ENCODE measurements at regions of chr15 and their contacts with region 1.

Region 1: GRCh38 chr15:78241007-78241406 is 6.6 kb upstream of the ACSBG1 start:
- DNase-seq: peak; percentile 80 to 88
- H3K4me3 ChIP-seq: no peak overlapping the region
- H3K4me3 Mint-ChIP-seq: no peak overlapping the region
- H3K27ac Mint-ChIP-seq: no peak overlapping the region
- H3K4me1 ChIP-seq: peaks cover 8% of the 10 kb centered on the region; the same call in 1 of the 2 replicates
- H3K4me1 Mint-ChIP-seq: peaks cover 6% of the 10 kb centered on the region
- H3K27me3 ChIP-seq: no peaks in the 10 kb centered on the region
- H3K27me3 Mint-ChIP-seq: no peaks in the 10 kb centered on the region
- CTCF ChIP-seq: peak; percentile 81 to 88

Region 2: DNA sequence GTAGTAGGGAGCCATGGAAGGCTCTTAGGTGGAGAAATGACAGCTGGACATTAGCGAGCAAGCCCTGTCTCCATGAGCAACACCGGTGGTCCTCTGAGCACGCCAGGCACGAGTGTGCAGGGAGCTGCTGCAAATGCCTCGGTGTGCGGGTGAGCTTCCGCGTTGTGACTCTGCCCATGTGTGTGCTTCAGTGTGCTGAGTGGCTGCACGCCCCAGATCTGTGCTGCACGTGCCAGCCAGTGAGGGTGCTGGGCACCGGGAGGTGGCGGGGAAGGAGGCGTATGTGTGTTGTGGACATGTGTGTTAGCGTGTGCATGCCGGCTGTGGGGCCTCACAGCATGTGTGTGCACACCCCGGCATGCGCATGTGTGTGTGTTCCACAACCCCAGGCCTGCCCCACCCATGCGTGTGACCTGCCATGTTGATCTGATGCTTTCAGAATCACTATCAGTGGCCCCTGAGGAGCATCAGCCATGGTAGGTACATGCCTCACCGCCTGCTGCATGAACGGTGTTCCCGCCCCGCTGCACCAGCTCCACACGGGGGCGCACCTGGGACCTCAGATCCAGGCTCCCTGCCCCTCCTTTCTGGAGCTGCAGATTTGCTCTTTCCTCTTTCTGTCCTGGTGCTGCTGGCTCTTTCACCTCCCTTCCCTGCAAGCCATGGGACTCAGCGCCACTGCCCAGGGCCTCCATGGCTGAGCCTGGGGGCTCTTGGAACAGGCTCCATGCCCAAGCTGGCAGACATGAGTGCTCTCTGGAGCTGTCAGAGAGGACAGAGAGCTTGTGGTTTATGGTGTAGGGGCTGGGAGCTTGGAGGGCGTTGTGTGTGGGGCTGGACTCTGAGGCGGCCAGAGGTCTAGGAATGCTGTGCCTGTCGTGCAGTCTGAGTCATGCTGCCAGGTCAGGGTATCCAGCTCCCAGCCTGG is 332.9 kb before region 1 on chr15:
- CTCF ChIA-PET with region 1: no interaction called
- POLR2A ChIA-PET with region 1: no interaction called
- intact Hi-C with region 1: loop called (anchors 5 kb)
- DNase-seq: peak; percentile 77 to 82
- H3K4me3 ChIP-seq: no peak overlapping the region
- H3K4me3 Mint-ChIP-seq: no peak overlapping the region
- H3K27ac Mint-ChIP-seq: no peak overlapping the region
- H3K4me1 ChIP-seq: 0 out of 2 replicates have a peak, but pooled peaks cover 3% of the 10 kb centered on the region
- H3K4me1 Mint-ChIP-seq: no peaks in the 10 kb centered on the region
- H3K27me3 ChIP-seq: no peaks in the 10 kb centered on the region
- H3K27me3 Mint-ChIP-seq: peaks cover 10% of the 10 kb centered on the region
- CTCF ChIP-seq: peak; percentile 54 to 74

Region 3: GRCh38 chr15:77959432-77959879 is 281.6 kb before region 1 on chr15:
- CTCF ChIA-PET with region 1: interaction called, 4 read pairs
- POLR2A ChIA-PET with region 1: no interaction called
- intact Hi-C with region 1: loop called (anchors 1 kb)
- DNase-seq: peak; percentile 78 to 87
- H3K4me3 ChIP-seq: no peak overlapping the region
- H3K4me3 Mint-ChIP-seq: peak overlapping the region; percentile 19
- H3K27ac Mint-ChIP-seq: no peak overlapping the region
- H3K4me1 ChIP-seq: no peaks in the 10 kb centered on the region
- H3K4me1 Mint-ChIP-seq: no peaks in the 10 kb centered on the region
- H3K27me3 ChIP-seq: no peaks in the 10 kb centered on the region
- H3K27me3 Mint-ChIP-seq: peaks cover 9% of the 10 kb centered on the region
- CTCF ChIP-seq: peak; percentile 80 to 91

Region 4: GRCh38 chr15:78131295-78132061 is 109.5 kb before region 1 on chr15 and contains the start of gene CIB2:
- CTCF ChIA-PET with region 1: interaction called, 4 read pairs
- POLR2A ChIA-PET with region 1: no interaction called
- intact Hi-C with region 1: loop called (anchors 5 kb)
- DNase-seq: peak; percentile 59 to 82
- H3K4me3 ChIP-seq: peak within 1 kb of the TSS; percentile 69
- H3K4me3 Mint-ChIP-seq: peak within 1 kb of the TSS; percentile 81
- H3K27ac Mint-ChIP-seq: peak within 1 kb of the TSS; percentile 57
- H3K4me1 ChIP-seq: peaks cover 18% of the 10 kb centered on the region
- H3K4me1 Mint-ChIP-seq: peaks cover 17% of the 10 kb centered on the region
- H3K27me3 ChIP-seq: no peaks in the 10 kb centered on the region
- H3K27me3 Mint-ChIP-seq: no peaks in the 10 kb centered on the region
- CTCF ChIP-seq: peak; percentile 14 to 62
- total RNA-seq, gene CIB2: 0.67 and 0.75 TPM in 2 replicates

Region 5: DNA sequence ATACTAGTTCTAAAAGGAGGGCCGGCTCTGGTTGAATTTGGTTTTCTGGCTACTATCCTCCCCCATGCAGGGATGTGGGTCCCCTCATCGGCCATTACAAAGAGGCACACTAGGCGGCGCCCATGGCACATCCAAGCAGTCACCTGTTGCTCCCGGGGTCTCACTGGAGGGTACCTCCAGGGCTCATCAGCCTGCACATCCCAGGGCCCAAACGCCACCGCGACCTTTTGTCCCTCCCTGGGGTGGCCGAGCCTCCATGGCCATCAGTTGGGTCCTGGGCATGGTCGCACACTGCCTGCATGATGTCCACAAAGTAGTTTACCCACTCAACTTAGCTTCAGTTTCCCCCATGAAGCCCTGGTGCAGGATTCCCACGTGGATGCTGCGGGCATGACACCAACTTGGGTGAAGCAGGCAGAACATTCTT is 63.5 kb before region 1 on chr15:
- CTCF ChIA-PET with region 1: interaction called, 3 read pairs
- POLR2A ChIA-PET with region 1: no interaction called
- intact Hi-C with region 1: loop called (anchors 1 kb)
- DNase-seq: peak in 1 of 2 experiments; percentile 42
- H3K4me3 ChIP-seq: no peak overlapping the region
- H3K4me3 Mint-ChIP-seq: no peak overlapping the region
- H3K27ac Mint-ChIP-seq: no peak overlapping the region
- H3K4me1 ChIP-seq: no peaks in the 10 kb centered on the region
- H3K4me1 Mint-ChIP-seq: no peaks in the 10 kb centered on the region
- H3K27me3 ChIP-seq: no peaks in the 10 kb centered on the region
- H3K27me3 Mint-ChIP-seq: no peaks in the 10 kb centered on the region
- CTCF ChIP-seq: peak; percentile 55 to 65

Region 6: DNA sequence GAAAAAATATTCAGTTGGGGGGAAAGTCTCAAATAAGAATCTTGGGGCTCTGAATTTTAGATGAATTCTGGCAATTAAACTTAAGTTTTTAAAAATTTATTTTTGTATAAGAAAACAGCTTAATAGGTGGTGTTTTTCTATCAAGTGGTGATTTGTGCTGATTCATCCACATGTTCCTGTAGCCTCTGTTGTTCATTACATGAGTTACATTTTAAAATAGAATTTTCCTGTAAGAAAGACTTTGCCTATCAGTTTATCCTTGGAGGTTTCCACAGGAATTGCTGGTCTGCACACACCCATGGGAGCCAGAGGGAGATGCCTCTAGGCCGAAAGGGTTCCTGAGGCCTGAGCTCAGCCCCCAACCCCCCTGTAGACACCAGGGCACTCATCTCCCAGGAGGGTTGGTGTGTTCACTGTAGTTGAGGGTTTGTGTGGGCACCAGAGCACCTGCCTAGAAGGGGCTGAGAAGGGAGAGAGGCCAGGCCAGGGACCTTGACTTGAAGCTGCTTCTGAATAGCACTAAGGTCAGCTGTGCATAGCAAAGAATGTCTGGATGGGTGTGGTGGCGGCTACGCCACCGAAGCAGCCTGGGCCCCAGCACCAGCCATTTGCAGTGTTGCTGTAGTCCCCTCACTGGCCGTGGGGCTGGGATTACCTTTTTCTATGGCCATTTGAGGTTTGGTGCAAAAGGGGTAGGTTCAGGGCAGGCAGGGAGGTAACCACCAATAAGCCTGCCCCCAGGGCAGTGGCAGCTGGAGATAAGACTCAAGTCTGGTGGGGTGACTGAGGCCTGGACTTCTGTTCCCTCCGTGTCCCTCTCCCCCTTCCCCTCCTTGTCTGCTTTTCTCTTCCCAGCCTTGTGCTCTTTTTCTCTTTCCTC is 35.3 kb after region 1 on chr15:
- CTCF ChIA-PET with region 1: no interaction called
- POLR2A ChIA-PET with region 1: no interaction called
- intact Hi-C with region 1: no loop called
- DNase-seq: no peak
- H3K4me3 ChIP-seq: no peak overlapping the region
- H3K4me3 Mint-ChIP-seq: no peak overlapping the region
- H3K27ac Mint-ChIP-seq: no peak overlapping the region
- H3K4me1 ChIP-seq: 0 out of 2 replicates have a peak, but pooled peaks cover 3% of the 10 kb centered on the region
- H3K4me1 Mint-ChIP-seq: no peaks in the 10 kb centered on the region
- H3K27me3 ChIP-seq: no peaks in the 10 kb centered on the region
- H3K27me3 Mint-ChIP-seq: no peaks in the 10 kb centered on the region
- CTCF ChIP-seq: no peak